T-cell (primary cell): ENCODE measurements at regions of chr9 and their contacts with region 1.

Region 1: DNA sequence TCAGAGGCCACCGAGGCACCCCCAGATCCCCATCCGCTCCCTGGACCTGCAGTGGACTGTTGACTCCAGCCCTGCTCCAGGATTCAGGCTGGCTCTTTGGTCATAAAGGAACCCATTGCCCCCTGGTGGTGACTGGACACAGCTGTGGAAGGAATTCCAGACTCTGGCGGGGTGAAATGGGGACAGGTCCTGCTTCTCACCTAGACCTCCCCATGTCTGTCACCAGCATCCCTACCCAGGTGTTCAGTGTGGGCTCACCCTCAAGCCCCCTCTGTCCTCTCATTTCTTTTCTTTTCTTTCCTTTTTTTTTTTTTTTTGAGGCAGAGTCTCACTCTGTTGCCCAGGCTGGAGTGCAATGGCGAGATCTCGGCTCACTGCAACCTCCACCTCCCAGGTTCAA is 25.5 kb upstream of the STXBP1 start:
- DNase-seq: peak in 30 of 35 experiments; percentile 7 to 77 (median 43)
- ATAC-seq: peak in 3 of 4 experiments; percentile 67 to 75 (median 71)
- H3K4me3 ChIP-seq: no peak overlapping the region
- H3K4me3 Mint-ChIP-seq: no peak overlapping the region
- H3K27ac ChIP-seq: no peak overlapping the region
- H3K27ac Mint-ChIP-seq: no peak overlapping the region
- H3K4me1 ChIP-seq: no peaks in the 10 kb centered on the region
- H3K4me1 Mint-ChIP-seq: peaks cover 0 to 4% (median 0%) of the 10 kb centered on the region in 3 donors
- H3K27me3 ChIP-seq: peaks cover 0 to 9% of the 10 kb centered on the region in 2 experiments
- H3K27me3 Mint-ChIP-seq: peaks cover 6 to 15% of the 10 kb centered on the region in 2 donors

Region 2: DNA sequence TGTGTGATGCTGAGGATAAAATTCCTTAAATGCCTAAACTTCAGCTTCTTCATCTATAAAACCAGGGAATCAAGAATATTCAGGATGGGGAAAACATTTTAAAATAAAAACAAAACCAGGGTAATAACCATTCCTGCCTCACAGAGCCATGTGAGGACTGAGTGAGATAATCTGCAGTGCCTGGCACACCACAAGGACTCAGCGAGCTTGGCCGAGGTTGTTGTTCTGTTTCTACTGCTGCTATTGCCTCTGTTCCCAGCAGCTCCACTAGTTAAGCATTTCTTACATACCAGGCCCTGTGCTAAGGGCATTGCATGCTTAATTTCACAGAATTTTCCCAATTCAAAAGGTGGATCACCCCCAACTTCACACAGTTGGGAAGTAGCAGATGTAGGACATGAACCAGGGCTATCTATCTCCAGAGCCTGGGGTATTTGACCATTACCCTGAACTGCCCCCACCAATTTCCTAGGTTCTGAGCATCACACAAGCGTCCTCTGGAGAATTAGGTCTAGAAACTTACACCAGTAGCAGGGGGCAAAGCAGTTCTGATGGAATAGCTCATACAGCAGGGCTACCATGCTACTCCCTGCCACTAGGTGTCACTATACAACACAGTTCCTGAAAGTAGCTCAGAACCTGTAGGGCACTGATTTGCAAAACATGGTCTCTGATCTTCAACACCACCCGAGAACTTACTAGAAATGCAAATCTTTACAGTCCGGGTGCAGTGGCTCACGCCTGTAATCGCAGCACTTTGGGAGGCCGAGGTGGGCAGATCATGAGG is 60.9 kb before region 1 on chr9:
- CTCF ChIA-PET with region 1: interaction called in 1 of 2 experiments, 18 read pairs
- POLR2A ChIA-PET with region 1: no interaction called
- DNase-seq: peak in 5 of 35 experiments; percentile 4 to 40 (median 14)
- ATAC-seq: peak in 1 of 4 experiments; percentile 50
- H3K4me3 ChIP-seq: no peak overlapping the region
- H3K4me3 Mint-ChIP-seq: no peak overlapping the region
- H3K27ac ChIP-seq: no peak overlapping the region
- H3K27ac Mint-ChIP-seq: no peak overlapping the region
- H3K4me1 ChIP-seq: no peaks in the 10 kb centered on the region
- H3K4me1 Mint-ChIP-seq: no peaks in the 10 kb centered on the region
- H3K27me3 ChIP-seq: no peaks in the 10 kb centered on the region
- H3K27me3 Mint-ChIP-seq: no peaks in the 10 kb centered on the region

Region 3: DNA sequence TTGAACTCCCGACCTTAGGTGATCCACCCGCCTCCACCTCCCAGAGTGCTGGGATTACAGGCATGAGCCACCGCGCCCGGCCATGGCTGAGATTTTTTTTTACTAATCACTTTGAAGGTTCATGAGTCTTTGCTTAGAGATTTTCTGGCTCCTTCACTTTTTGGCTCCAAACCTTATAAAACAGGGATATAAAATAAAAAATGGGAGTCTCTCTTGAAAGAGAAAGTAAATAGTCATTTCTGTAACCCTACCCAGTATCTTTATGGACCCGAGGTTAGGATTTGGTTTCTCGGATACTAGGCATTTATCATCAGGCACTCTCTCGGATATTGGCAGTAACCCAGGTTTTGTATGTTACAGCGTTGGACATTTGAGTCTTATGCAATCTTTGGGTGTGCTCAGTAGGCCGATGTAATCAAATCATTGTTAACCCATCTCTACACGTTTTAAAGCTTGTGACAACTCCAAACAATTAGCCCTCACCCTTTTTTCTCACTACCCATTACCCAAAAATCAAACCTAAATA is 50.8 kb after region 1 on chr9:
- CTCF ChIA-PET with region 1: no interaction called
- POLR2A ChIA-PET with region 1: interaction called in 1 of 2 experiments, 12 read pairs
- DNase-seq: no peak
- ATAC-seq: no peak
- H3K4me3 ChIP-seq: no peak overlapping the region
- H3K4me3 Mint-ChIP-seq: no peak overlapping the region
- H3K27ac ChIP-seq: no peak overlapping the region
- H3K27ac Mint-ChIP-seq: no peak overlapping the region
- H3K4me1 ChIP-seq: peaks cover 0 to 7% of the 10 kb centered on the region in 2 experiments
- H3K4me1 Mint-ChIP-seq: peaks cover 12 to 17% (median 16%) of the 10 kb centered on the region in 3 donors
- H3K27me3 ChIP-seq: peaks cover 0 to 2% of the 10 kb centered on the region in 2 experiments
- H3K27me3 Mint-ChIP-seq: no peaks in the 10 kb centered on the region